MCF 10A (cell line): ENCODE measurements at regions of chr1 and their contacts with region 1.

Region 1: DNA sequence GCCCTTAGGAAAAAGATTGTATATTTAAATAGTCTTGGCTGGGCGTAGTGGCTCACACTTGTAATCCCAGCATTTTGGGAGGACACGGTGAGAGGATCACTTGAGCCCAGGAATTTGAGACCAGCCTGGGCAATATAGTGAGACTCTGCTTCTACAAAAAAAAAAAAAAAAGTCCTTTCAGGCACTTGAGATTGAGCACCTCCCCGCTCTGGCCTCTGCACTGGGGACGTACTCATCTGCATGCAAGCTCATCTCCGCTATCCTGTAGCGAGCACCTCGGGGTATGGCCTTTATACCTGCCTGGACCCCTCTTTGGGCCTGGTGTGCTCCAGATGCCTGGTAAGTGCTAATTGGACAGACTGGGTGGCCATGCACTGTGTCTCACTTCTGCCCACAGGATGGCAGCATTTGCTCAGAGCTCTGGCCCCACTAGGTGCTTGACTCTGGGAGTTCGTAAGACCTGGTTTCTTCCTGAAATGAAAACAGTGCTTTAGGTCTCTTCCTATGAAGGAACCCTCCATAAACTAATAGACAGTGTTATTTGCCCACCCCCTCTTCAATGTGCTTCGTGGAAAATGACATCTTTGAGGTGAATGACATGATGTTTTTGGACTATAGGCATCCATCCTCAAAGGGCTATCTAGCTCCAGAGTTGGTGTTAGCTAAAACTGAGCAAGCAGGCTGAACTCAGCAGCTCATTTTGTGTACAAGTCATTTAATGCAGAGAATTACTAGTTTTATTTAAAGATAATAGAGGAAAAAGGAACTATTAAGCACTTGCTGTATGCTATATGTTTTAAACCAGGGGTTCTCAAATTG is 61.7 kb upstream of the ADAR start:
- DNase-seq: peak; percentile 88
- H3K4me3 Mint-ChIP-seq: no peak overlapping the region
- H3K27ac Mint-ChIP-seq: no peak overlapping the region
- H3K4me1 Mint-ChIP-seq: no peaks in the 10 kb centered on the region
- H3K27me3 Mint-ChIP-seq: peaks cover 19% of the 10 kb centered on the region
- CTCF ChIP-seq: peak; percentile 96

Region 2: DNA sequence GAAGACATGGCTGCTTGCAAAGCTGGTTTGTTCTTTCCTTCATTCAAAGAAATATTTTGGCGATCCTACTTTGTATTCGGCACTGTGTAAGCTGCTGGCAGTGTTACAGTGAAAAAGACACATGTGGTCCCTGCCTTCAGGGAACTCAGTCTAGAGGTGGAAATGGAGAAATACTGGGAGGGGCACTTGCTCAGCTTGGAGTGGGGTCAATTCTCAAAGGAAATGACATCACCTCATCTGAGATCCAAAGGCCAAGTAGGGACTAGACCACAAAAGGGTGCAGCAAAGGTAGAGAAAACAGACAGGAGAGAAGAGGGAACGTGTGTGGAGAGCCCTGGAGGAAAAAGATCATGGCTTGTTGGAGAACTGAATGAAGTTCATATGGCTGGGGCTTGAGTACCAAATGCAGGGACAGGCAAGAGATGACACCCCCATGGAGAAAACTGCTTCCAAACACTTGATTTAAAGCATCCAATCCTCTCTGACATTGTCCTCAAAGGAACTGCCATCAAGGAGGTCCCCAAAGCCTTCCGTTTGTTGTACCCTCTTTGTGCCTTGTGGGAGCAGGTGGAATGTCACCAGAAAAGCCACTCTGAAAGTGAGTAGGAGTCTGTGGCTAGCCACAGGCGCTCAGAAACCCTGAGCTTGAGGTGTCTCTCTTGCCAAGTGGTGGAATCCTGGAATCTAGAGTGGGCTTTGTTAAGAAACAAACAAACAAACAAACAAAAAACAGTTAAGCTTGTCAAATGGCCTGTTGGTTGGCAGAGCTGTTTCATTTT is 215.9 kb before region 1 on chr1:
- CTCF ChIA-PET with region 1: no interaction called
- POLR2A ChIA-PET with region 1: no interaction called
- intact Hi-C with region 1: no loop called
- DNase-seq: peak; percentile 90
- H3K4me3 Mint-ChIP-seq: no peak overlapping the region
- H3K27ac Mint-ChIP-seq: peak overlapping the region; percentile 8
- H3K4me1 Mint-ChIP-seq: peaks cover 20% of the 10 kb centered on the region
- H3K27me3 Mint-ChIP-seq: no peaks in the 10 kb centered on the region
- CTCF ChIP-seq: no peak

Region 3: DNA sequence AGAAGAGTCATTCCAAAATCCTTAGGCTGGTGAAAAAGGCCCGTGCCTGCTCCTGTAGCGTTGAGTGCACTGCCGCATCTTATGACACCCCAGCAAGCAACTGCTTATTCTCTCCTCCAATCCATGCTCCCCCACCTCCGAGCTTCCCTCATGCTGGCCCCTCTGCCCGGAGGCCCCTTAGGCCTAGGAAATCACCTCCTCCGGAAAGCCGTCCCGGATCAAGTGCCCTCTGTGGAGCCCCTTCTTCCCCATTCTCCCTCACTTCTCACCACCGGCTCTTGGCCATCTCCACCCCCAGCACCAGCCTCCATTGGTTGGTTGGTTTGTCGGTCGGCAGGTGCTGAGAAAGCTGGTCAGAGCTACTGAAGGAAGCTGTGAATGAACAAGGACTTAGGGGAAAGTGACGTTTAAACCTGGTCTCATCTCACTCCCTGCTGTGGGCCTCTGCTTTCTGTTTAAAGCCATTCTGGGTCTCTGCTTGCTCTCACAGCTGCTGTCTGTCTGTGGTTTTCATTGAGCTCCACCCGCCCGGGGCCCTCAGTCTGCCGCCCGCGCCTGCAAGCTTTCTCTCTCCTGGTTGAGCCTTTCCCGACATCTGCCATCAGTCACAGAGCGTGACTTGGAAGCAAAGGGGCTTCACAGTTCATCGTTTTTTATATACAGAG is 78.2 kb after region 1 on chr1:
- CTCF ChIA-PET with region 1: interaction called, 8 read pairs
- POLR2A ChIA-PET with region 1: no interaction called
- intact Hi-C with region 1: loop called (anchors 1 kb)
- DNase-seq: no peak
- H3K4me3 Mint-ChIP-seq: no peak overlapping the region
- H3K27ac Mint-ChIP-seq: no peak overlapping the region
- H3K4me1 Mint-ChIP-seq: no peaks in the 10 kb centered on the region
- H3K27me3 Mint-ChIP-seq: peaks cover 80% of the 10 kb centered on the region
- CTCF ChIP-seq: no peak

Region 4: GRCh38 chr1:154849645-154850131 is 180.0 kb after region 1 on chr1:
- CTCF ChIA-PET with region 1: interaction called, 11 read pairs
- POLR2A ChIA-PET with region 1: no interaction called
- intact Hi-C with region 1: no loop called
- DNase-seq: no peak
- H3K4me3 Mint-ChIP-seq: no peak overlapping the region
- H3K27ac Mint-ChIP-seq: no peak overlapping the region
- H3K4me1 Mint-ChIP-seq: no peaks in the 10 kb centered on the region
- H3K27me3 Mint-ChIP-seq: peaks cover 39% of the 10 kb centered on the region
- CTCF ChIP-seq: no peak

Region 5: GRCh38 chr1:154878371-154879022 is 208.8 kb after region 1 on chr1:
- CTCF ChIA-PET with region 1: interaction called, 113 read pairs
- POLR2A ChIA-PET with region 1: interaction called, 5 read pairs
- intact Hi-C with region 1: loop called (anchors 1 kb)
- DNase-seq: peak; percentile 81
- H3K4me3 Mint-ChIP-seq: no peak overlapping the region
- H3K27ac Mint-ChIP-seq: no peak overlapping the region
- H3K4me1 Mint-ChIP-seq: peaks cover 14% of the 10 kb centered on the region
- H3K27me3 Mint-ChIP-seq: no peaks in the 10 kb centered on the region
- CTCF ChIP-seq: peak; percentile 97

Region 6: DNA sequence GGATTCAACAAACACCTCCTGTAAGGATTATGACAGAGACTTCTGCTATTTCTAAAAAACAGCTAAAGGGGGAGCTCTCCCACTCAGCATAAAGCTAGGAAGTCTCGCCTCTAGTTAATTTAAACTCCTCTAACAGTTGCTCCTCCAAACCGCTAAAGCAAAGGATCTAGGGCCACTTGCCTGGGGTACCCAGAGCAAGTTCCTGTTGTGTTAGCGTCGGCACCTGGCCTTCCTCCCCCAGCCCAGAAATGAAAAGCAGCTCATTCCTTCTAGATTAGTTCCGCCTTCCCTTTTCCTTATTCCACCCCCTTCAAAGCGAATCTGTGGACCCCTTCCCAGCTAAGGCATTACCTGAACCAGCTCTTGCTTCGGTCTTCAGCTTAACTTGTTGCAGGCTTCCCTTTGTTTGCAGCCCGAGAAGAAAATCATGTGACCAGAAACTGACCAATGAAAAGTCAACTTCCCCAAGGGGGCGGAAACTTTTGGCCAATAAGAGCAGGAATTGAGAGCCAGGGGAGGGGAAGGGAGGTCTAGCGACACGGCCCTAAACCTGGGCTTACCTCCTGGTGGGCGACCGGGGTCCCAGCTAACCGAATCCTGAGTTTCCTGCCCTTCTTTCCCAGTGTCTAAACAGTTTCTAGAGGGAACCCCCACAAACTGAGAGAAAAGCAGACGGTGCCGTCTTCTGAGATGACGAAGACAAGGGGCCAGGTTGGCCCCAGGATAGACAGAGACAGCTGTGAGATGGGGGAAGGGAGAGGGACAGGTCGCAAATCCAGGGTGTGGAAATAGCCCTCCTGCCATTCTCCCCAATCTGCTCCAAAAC is 286.3 kb after region 1 on chr1 and contains the start of gene PBXIP1:
- CTCF ChIA-PET with region 1: interaction called, 12 read pairs
- POLR2A ChIA-PET with region 1: no interaction called
- intact Hi-C with region 1: no loop called
- DNase-seq: peak; percentile 97
- H3K4me3 Mint-ChIP-seq: peak within 1 kb of the TSS; percentile 88
- H3K27ac Mint-ChIP-seq: peak within 1 kb of the TSS; percentile 68
- H3K4me1 Mint-ChIP-seq: peaks cover 43% of the 10 kb centered on the region
- H3K27me3 Mint-ChIP-seq: no peaks in the 10 kb centered on the region
- CTCF ChIP-seq: peak; percentile 24
- total RNA-seq, gene PBXIP1: 11.3 TPM in 2 replicates